Activated CD4-positive, alpha-beta T cell treated with anti-CD3 and anti-CD28 coated beads, Interleukin-2, amount 10 ng/mL, durations not matched to agents 24 days and 14 days (primary cell): ENCODE measurements at regions of chr6 and their contacts with region 1.

Region 1: GRCh38 chr6:31197559-31198305 is 27.2 kb upstream of the POU5F1 start:
- DNase-seq: peak; percentile 98
- H3K4me3 Mint-ChIP-seq: peak overlapping the region; percentile 89
- H3K27ac Mint-ChIP-seq: peak overlapping the region; percentile 99
- H3K4me1 Mint-ChIP-seq: peaks cover 45% of the 10 kb centered on the region
- H3K27me3 Mint-ChIP-seq: no peaks in the 10 kb centered on the region

Region 2: DNA sequence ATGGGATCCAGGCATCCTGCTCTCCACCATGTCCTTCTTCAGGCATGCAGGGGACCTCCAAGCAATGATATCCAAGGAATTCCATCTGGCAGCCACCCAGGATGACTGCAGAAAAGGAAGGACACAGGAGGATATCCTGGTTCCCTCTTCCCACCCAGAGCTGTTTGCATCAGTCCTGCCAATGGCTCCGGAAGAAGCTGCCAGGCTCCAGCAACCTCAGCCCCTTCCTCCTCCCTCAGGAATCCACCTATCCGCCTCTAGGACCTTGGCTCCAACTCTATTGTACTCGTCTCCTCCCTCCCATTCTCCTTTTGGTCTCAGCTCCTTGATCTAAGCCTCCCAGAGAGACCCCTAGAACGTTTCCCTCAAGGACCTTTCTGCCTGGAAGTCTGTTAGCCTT is 58.1 kb before region 1 on chr6:
- intact Hi-C with region 1: loop called (anchors 1 kb)
- DNase-seq: no peak
- H3K4me3 Mint-ChIP-seq: no peak overlapping the region
- H3K27ac Mint-ChIP-seq: no peak overlapping the region
- H3K4me1 Mint-ChIP-seq: peaks cover 4% of the 10 kb centered on the region
- H3K27me3 Mint-ChIP-seq: peaks cover 6% of the 10 kb centered on the region

Region 3: GRCh38 chr6:31158140-31158862 is 39.4 kb before region 1 on chr6 and contains the start of gene TCF19:
- intact Hi-C with region 1: loop called (anchors 1 kb)
- DNase-seq: peak; percentile 100
- H3K4me3 Mint-ChIP-seq: peak within 1 kb of the TSS; percentile 97
- H3K27ac Mint-ChIP-seq: peak within 1 kb of the TSS; percentile 89
- H3K4me1 Mint-ChIP-seq: peaks cover 41% of the 10 kb centered on the region
- H3K27me3 Mint-ChIP-seq: peaks cover 3% of the 10 kb centered on the region
- total RNA-seq, gene TCF19: 79.5 and 82.6 TPM in 2 replicates

Region 4: GRCh38 chr6:31216208-31216898 is 18.6 kb after region 1 on chr6:
- intact Hi-C with region 1: no loop called
- DNase-seq: no peak
- H3K4me3 Mint-ChIP-seq: no peak overlapping the region
- H3K27ac Mint-ChIP-seq: peak overlapping the region; percentile 19
- H3K4me1 Mint-ChIP-seq: peaks cover 5% of the 10 kb centered on the region
- H3K27me3 Mint-ChIP-seq: peaks cover 4% of the 10 kb centered on the region

Region 5: GRCh38 chr6:31239854-31240253 is 42.1 kb after region 1 on chr6:
- intact Hi-C with region 1: no loop called
- DNase-seq: no peak
- H3K4me3 Mint-ChIP-seq: no peak overlapping the region
- H3K27ac Mint-ChIP-seq: no peak overlapping the region
- H3K4me1 Mint-ChIP-seq: no peaks in the 10 kb centered on the region
- H3K27me3 Mint-ChIP-seq: peaks cover 22% of the 10 kb centered on the region

Region 6: GRCh38 chr6:31271641-31272357 is 74.1 kb after region 1 on chr6 and contains the start of gene HLA-C:
- intact Hi-C with region 1: loop called (anchors 1 kb)
- DNase-seq: peak; percentile 97
- H3K4me3 Mint-ChIP-seq: peak within 1 kb of the TSS; percentile 98
- H3K27ac Mint-ChIP-seq: peak within 1 kb of the TSS; percentile 100
- H3K4me1 Mint-ChIP-seq: peaks cover 51% of the 10 kb centered on the region
- H3K27me3 Mint-ChIP-seq: peaks cover 9% of the 10 kb centered on the region
- total RNA-seq, gene HLA-C: 857 and 893 TPM in 2 replicates

Region 7: GRCh38 chr6:31356946-31357466 is 159.3 kb after region 1 on chr6 and contains the start of gene HLA-B:
- intact Hi-C with region 1: loop called (anchors 2 kb)
- DNase-seq: peak; percentile 91
- H3K4me3 Mint-ChIP-seq: peak within 1 kb of the TSS; percentile 95
- H3K27ac Mint-ChIP-seq: peak within 1 kb of the TSS; percentile 99
- H3K4me1 Mint-ChIP-seq: peaks cover 52% of the 10 kb centered on the region
- H3K27me3 Mint-ChIP-seq: peaks cover 8% of the 10 kb centered on the region
- total RNA-seq, gene HLA-B: 3,406 and 3,483 TPM in 2 replicates

Region 8: GRCh38 chr6:31366693-31367470 is 169.2 kb after region 1 on chr6:
- intact Hi-C with region 1: loop called (anchors 1 kb)
- DNase-seq: peak; percentile 96
- H3K4me3 Mint-ChIP-seq: peak overlapping the region; percentile 79
- H3K27ac Mint-ChIP-seq: peak overlapping the region; percentile 42
- H3K4me1 Mint-ChIP-seq: peaks cover 13% of the 10 kb centered on the region
- H3K27me3 Mint-ChIP-seq: peaks cover 58% of the 10 kb centered on the region

Region 9: GRCh38 chr6:31619805-31620585 is 422.3 kb after region 1 on chr6:
- intact Hi-C with region 1: loop called (anchors 1 kb)
- DNase-seq: peak; percentile 99
- H3K4me3 Mint-ChIP-seq: peak overlapping the region; percentile 90
- H3K27ac Mint-ChIP-seq: peak overlapping the region; percentile 95
- H3K4me1 Mint-ChIP-seq: peaks cover 46% of the 10 kb centered on the region
- H3K27me3 Mint-ChIP-seq: no peaks in the 10 kb centered on the region